A673 (cell line): ENCODE measurements at regions of chr2 and their contacts with region 1.

Region 1: GRCh38 chr2:176126929-176127773 is 2.4 kb upstream of the HOXD8 start:
- DNase-seq: peak; percentile 87
- H3K4me3 ChIP-seq: peak overlapping the region; percentile 62
- H3K27ac ChIP-seq: peak overlapping the region; percentile 98
- H3K4me1 ChIP-seq: peaks cover 38% of the 10 kb centered on the region
- H3K27me3 ChIP-seq: no peaks in the 10 kb centered on the region
- CTCF ChIP-seq: peak; percentile 93

Region 2: GRCh38 chr2:175929850-175930249 is 197.3 kb before region 1 on chr2:
- CTCF ChIA-PET with region 1: no interaction called
- POLR2A ChIA-PET with region 1: no interaction called
- intact Hi-C with region 1: no loop called
- DNase-seq: no peak
- H3K4me3 ChIP-seq: no peak overlapping the region
- H3K27ac ChIP-seq: no peak overlapping the region
- H3K4me1 ChIP-seq: no peaks in the 10 kb centered on the region
- H3K27me3 ChIP-seq: no peaks in the 10 kb centered on the region
- CTCF ChIP-seq: no peak

Region 3: GRCh38 chr2:176554101-176555048 is 427.2 kb after region 1 on chr2:
- CTCF ChIA-PET with region 1: interaction called, 16 read pairs
- POLR2A ChIA-PET with region 1: interaction called, 4 read pairs
- intact Hi-C with region 1: loop called (anchors 5 kb)
- DNase-seq: peak; percentile 86
- H3K4me3 ChIP-seq: peak overlapping the region; percentile 53
- H3K27ac ChIP-seq: peak overlapping the region; percentile 80
- H3K4me1 ChIP-seq: peaks cover 19% of the 10 kb centered on the region
- H3K27me3 ChIP-seq: no peaks in the 10 kb centered on the region
- CTCF ChIP-seq: peak; percentile 82

Region 4: DNA sequence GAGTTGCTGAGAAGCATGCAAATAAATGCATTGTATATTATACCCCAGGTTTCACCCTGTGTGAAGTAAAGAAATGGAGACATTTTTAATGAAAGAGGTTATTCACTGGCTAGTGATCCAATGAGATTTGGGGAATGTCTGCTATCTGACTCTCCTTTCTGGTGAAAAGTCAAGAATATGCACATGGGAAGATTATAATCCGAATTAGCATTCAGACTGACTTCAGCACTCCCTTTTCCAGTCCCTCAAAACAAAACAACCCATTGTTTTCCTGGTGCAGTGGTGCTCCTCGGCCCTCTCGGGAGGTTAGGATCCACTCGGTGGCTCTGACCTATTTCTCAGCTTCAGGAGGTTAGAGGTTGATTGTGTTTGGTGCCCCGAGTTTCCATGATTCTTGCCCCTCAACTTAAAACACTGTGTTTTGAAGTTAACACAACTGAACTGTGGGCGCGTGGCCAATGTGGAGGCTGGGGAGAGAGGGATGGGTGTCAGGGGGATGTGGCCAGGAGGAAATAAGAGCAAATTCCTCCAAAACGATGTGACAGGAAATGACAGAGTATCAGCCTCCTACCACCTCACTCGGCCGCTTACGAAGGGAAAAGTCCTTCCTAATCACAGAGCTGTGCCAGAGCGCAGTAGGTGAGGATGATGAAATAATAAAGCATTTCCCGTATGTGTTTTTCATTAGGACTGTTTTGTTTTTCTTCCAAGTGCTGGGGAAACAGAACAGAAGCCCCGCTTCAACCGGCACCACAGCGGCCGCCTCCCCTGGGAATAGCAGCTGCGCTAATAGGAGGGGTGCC is 582.2 kb after region 1 on chr2:
- CTCF ChIA-PET with region 1: no interaction called
- POLR2A ChIA-PET with region 1: no interaction called
- intact Hi-C with region 1: loop called (anchors 5 kb)
- DNase-seq: peak; percentile 98
- H3K4me3 ChIP-seq: peak overlapping the region; percentile 3
- H3K27ac ChIP-seq: peak overlapping the region; percentile 97
- H3K4me1 ChIP-seq: peaks cover 68% of the 10 kb centered on the region
- H3K27me3 ChIP-seq: no peaks in the 10 kb centered on the region
- CTCF ChIP-seq: no peak

Region 5: DNA sequence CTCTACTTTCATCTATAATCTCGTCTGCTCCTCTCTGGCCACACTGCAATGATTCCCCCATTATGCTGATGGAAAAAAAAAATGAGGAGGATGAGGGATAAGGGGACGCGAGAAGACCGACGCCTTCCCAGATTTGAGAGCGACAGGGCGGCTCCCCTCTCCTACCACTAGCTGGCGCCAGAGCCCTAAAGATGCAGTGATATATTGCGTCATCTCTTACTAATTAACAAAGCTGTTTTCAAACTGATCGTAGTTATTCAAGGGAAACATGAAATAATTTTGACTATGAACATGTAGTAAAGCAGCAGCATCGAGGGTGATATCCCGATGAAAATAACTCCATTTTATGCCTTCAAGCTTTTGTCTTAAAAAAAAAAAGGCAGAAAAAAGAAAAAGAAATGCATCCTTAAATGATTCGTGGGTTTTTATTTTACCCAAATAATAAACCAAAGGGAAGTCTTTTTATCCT is 1037.5 kb after region 1 on chr2:
- CTCF ChIA-PET with region 1: interaction called, 3 read pairs
- POLR2A ChIA-PET with region 1: no interaction called
- intact Hi-C with region 1: loop called (anchors 5 kb)
- DNase-seq: peak; percentile 89
- H3K4me3 ChIP-seq: peak overlapping the region; percentile 28
- H3K27ac ChIP-seq: peak overlapping the region; percentile 66
- H3K4me1 ChIP-seq: peaks cover 48% of the 10 kb centered on the region
- H3K27me3 ChIP-seq: no peaks in the 10 kb centered on the region
- CTCF ChIP-seq: peak; percentile 100